Activated B cell treated with CpG ODN at 0.5 μM for 24 hours (primary cell): ENCODE measurements at regions of chr2 and their contacts with region 1.

Region 1: GRCh38 chr2:181305301-181306123 is 151.7 kb upstream of the ITGA4 start:
- DNase-seq: peak; percentile 22
- ATAC-seq: peak; percentile 49
- H3K4me3 Mint-ChIP-seq: peak overlapping the region; percentile 70
- H3K27ac Mint-ChIP-seq: peak overlapping the region; percentile 95
- H3K4me1 Mint-ChIP-seq: peaks cover 69% of the 10 kb centered on the region
- H3K27me3 Mint-ChIP-seq: no peaks in the 10 kb centered on the region
- CTCF ChIP-seq: no peak

Region 2: DNA sequence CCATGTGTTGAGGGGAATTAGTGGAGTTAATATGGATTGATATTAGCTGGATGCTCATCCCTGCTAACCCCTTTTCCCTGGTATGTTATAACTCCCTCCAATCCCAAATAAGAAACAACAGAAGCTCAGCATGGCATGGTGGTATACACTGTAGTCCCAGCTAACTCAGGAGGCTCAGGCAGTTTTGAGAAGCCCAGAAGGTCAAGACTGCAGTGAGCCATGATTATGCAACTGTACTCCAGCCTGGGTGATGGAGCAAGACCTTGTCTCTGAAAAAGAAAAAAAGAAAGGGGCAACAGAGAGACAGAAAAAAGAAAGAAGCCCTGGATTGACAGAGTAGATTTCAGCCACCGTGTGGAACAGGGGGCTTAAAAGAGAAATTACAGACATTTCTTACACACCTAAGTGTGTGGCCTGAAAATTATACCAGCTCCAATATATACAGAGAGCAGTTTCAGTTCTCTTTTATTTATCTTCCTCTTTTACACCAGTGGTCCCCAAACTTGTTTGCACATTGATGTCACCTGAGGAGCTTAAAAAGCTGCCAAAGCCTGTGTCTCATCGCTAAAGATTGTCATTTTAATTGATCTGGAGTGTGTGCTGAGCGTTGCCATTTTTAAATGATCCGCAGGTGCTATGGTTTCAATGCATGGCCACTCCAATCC is 121.5 kb before region 1 on chr2:
- CTCF ChIA-PET with region 1: interaction called, 5 read pairs
- POLR2A ChIA-PET with region 1: no interaction called
- intact Hi-C with region 1: loop called (anchors 2 kb)
- DNase-seq: no peak
- ATAC-seq: peak; percentile 94
- H3K4me3 Mint-ChIP-seq: no peak overlapping the region
- H3K27ac Mint-ChIP-seq: peak overlapping the region; percentile 38
- H3K4me1 Mint-ChIP-seq: peaks cover 18% of the 10 kb centered on the region
- H3K27me3 Mint-ChIP-seq: no peaks in the 10 kb centered on the region
- CTCF ChIP-seq: no peak

Region 3: DNA sequence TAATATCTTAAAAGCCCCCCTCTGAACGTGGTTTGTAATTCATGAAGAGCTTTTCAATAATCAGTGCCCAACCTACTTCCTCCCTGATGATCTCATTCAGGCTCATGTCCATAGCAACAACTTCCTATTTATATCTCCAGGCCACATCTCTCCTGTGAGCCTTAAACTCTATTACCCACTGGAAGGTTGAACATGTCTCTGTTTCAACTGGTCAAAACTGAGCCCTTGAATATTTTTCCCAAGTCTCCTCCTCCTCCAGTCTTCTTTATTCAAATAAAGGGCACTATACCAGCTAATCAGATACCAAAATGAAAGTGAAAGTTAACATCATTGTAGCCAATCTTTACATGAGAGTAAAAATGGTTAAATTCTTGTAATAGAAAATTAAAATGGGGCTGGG is 88.0 kb after region 1 on chr2:
- CTCF ChIA-PET with region 1: interaction called, 3 read pairs
- POLR2A ChIA-PET with region 1: interaction called, 4 read pairs
- intact Hi-C with region 1: loop called (anchors 1 kb)
- DNase-seq: no peak
- ATAC-seq: peak; percentile 79
- H3K4me3 Mint-ChIP-seq: peak overlapping the region; percentile 72
- H3K27ac Mint-ChIP-seq: peak overlapping the region; percentile 91
- H3K4me1 Mint-ChIP-seq: peaks cover 30% of the 10 kb centered on the region
- H3K27me3 Mint-ChIP-seq: no peaks in the 10 kb centered on the region
- CTCF ChIP-seq: no peak

Region 4: GRCh38 chr2:181430406-181431118 is 125.0 kb after region 1 on chr2:
- CTCF ChIA-PET with region 1: interaction called, 6 read pairs
- POLR2A ChIA-PET with region 1: interaction called, 5 read pairs
- intact Hi-C with region 1: loop called (anchors 1 kb)
- DNase-seq: no peak
- ATAC-seq: peak; percentile 92
- H3K4me3 Mint-ChIP-seq: no peak overlapping the region
- H3K27ac Mint-ChIP-seq: peak overlapping the region; percentile 82
- H3K4me1 Mint-ChIP-seq: peaks cover 17% of the 10 kb centered on the region
- H3K27me3 Mint-ChIP-seq: no peaks in the 10 kb centered on the region
- CTCF ChIP-seq: no peak

Region 5: DNA sequence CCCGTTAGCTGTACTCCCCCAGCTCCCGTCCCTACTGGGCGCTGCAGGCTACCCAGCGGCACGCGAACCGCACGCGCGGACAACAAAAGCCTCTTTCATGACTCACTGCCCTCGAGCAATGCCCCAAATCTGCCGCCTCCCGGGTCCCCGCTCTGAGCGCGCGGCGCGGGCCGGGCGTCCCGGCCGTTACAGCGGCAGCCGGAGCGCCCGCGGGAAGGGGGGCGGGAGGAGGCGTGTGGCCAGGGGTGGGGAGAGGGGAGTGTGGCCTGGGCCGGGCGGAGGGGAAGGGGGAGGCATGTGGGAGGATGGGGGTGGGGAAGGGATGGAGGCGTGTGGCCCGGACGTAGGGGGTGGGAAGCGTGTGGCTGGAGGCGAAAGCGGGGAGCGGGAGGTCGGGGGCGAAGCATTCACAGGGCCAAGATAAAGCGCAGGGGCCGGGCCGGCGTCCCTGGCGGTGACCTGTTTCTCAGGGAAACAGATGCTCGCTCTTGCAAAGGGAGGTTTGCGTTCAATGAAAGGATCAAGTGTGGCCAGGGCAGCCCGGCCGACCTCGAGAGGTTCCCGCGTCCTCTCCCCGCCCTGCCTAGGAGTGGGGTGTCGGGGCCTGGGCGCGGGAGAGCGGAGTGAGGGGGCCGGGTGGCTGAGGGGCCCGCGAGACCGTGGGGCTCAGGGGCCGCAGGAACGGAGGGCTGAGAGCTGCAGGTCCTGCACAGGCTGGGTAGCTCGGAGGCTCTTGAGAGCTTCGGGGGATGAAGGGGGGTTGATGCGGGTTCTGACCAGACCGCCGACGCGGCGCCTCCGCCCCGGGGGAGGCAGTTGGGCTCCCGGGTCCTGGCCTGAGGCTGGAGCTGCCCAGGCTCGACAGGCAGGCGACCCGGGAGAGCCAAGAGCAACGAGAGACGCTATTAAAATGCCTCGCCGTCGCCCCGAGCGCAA is 378.3 kb after region 1 on chr2:
- CTCF ChIA-PET with region 1: no interaction called
- POLR2A ChIA-PET with region 1: no interaction called
- intact Hi-C with region 1: loop called (anchors 10 kb)
- DNase-seq: peak; percentile 24
- ATAC-seq: peak; percentile 43
- H3K4me3 Mint-ChIP-seq: peak overlapping the region; percentile 68
- H3K27ac Mint-ChIP-seq: no peak overlapping the region
- H3K4me1 Mint-ChIP-seq: peaks cover 51% of the 10 kb centered on the region
- H3K27me3 Mint-ChIP-seq: peaks cover 81% of the 10 kb centered on the region
- CTCF ChIP-seq: no peak

Region 6: DNA sequence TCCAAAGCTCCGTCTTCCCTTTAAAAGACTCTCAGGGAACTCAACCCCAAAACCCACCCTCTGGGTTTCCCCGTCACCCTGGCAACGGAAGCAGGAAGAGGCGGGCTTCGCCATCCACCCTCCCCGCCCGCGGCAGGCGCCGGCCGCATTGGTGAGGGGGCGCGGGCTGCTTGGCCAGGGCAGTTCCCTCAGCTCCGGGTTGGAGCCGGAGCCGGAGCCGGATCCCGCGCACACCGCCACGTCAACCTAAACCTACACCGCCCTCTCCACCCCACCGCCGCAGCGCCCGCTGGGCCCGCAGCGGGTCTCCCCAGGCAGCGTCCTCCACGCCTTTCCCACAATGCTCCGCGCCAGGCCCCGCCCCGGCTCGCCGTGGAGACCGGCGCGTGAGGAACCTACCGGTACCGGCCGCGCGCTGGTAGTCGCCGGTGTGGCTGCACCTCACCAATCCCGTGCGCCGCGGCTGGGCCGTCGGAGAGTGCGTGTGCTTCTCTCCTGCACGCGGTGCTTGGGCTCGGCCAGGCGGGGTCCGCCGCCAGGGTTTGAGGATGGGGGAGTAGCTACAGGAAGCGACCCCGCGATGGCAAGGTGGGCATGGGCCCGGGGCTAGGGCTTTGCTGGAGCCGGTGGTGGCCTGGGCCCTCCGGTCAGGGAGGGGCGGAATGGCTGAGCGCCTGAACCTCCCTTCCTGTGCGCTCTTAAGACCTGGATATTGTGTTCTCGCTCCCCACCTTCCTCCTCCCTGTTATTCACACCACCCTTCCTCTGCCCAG is 1410.6 kb after region 1 on chr2 and contains the start of gene DNAJC10:
- CTCF ChIA-PET with region 1: no interaction called
- POLR2A ChIA-PET with region 1: no interaction called
- intact Hi-C with region 1: loop called (anchors 5 kb)
- DNase-seq: peak; percentile 94
- ATAC-seq: peak; percentile 78
- H3K4me3 Mint-ChIP-seq: no peak within 1 kb of the TSS
- H3K27ac Mint-ChIP-seq: no peak within 1 kb of the TSS
- H3K4me1 Mint-ChIP-seq: peaks cover 12% of the 10 kb centered on the region
- H3K27me3 Mint-ChIP-seq: no peaks in the 10 kb centered on the region
- CTCF ChIP-seq: no peak
- total RNA-seq, gene DNAJC10: 119 and 132 TPM in 2 replicates